ENCODE measurements at regions of chr22 and their contacts with region 1.

Region 1: GRCh38 chr22:39319270-39320022 is at the start of gene RPL3:
- DNase-seq: peak; percentile 96 to 100 (median 98)
- ATAC-seq: peak; percentile 85
- H3K4me3 ChIP-seq: peak within 1 kb of the TSS; percentile 91 to 99
- H3K4me3 Mint-ChIP-seq: peak within 1 kb of the TSS; percentile 96
- H3K27ac ChIP-seq: peak within 1 kb of the TSS; percentile 81 to 90
- H3K27ac Mint-ChIP-seq: peak within 1 kb of the TSS; percentile 96
- H3K4me1 ChIP-seq: peaks cover 45% of the 10 kb centered on the region
- H3K4me1 Mint-ChIP-seq: peaks cover 46% of the 10 kb centered on the region
- H3K27me3 ChIP-seq: no peaks in the 10 kb centered on the region
- H3K27me3 Mint-ChIP-seq: no peaks in the 10 kb centered on the region
- CTCF ChIP-seq: no peak
- total RNA-seq, gene RPL3: 3,777 to 3,874 TPM

Region 2: DNA sequence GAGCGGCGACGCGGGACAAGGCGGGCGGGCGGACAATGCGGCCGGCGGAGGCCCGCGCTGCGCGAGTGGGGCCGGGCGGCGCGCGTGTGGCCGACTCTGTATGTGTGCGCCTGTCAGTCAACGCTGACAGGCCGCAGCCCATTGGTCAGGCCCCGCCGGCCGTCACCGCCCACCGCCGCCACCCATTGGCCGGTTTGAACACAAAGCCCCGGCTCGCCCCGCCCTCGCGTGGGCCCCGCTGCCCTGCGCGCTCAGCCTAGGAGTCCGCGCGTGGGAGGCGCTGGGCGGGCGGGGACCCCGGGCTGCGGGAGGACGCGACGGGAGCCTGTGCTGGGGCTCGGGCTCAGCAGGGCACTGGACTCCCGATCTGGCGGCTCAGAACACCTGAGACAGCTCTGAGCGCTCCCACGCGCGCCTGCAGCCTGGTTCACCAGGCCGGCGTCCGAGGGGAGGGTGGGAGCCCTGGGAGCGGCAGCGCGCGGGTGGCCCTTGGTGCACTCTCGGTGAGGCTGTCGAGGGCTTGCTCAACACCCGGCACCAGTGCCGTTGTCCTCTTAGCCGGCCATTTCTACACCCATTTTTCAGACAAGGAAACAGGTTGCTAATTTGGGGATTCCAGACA is 563.4 kb before region 1 on chr22 and contains the start of gene SUN2:
- CTCF ChIA-PET with region 1: no interaction called
- POLR2A ChIA-PET with region 1: no interaction called
- intact Hi-C with region 1: loop called (anchors 5 to 10 kb)
- DNase-seq: peak; percentile 90 to 97 (median 94)
- ATAC-seq: peak; percentile 66
- H3K4me3 ChIP-seq: peak within 1 kb of the TSS; percentile 91 to 96
- H3K4me3 Mint-ChIP-seq: peak within 1 kb of the TSS; percentile 98
- H3K27ac ChIP-seq: peak within 1 kb of the TSS; percentile 65 to 73
- H3K27ac Mint-ChIP-seq: peak within 1 kb of the TSS; percentile 99
- H3K4me1 ChIP-seq: peaks cover 57% of the 10 kb centered on the region
- H3K4me1 Mint-ChIP-seq: peaks cover 58% of the 10 kb centered on the region
- H3K27me3 ChIP-seq: no peaks in the 10 kb centered on the region
- H3K27me3 Mint-ChIP-seq: no peaks in the 10 kb centered on the region
- CTCF ChIP-seq: no peak
- total RNA-seq, gene SUN2: 431 to 454 TPM

Region 3: DNA sequence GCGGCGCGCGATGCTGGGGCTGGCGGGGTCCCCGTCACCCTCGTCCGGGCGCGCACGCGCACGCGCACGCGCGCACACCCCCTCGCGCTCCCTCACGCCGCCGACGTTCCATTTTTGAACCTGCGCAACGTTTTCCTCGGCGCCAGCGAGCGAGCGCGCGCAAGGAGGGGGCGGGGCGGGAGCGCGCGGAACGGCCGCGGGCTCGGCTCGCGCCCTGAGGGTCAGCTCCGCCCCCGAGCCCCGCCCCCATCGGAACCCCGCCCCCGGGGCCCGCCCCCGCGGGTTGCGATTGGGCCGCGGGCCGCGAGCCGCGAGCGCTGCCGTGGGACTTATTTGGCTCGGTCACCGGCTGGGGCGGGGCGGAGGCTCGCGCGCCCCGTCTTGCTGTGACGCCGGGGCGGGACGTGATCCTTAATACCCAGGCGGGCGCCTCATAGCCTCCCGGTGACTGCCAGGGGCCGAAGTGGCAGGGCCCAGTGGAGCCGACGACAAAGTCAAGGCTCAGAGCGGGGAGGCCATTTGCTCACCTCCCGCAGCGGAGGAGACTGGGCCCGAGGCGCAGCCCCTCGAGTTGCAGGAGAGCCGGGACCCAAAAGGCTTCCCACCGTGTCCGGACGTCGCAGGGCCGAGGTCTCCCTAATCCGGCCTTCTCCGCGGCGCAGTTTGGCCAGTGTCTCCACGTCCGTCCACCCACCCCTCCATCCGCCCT is 166.8 kb before region 1 on chr22 and contains the start of gene CBX7:
- CTCF ChIA-PET with region 1: interaction called, 14 read pairs
- POLR2A ChIA-PET with region 1: interaction called, 54 read pairs
- intact Hi-C with region 1: loop called (anchors 1 kb)
- DNase-seq: peak; percentile 84 to 99 (median 92)
- ATAC-seq: peak; percentile 82
- H3K4me3 ChIP-seq: peak within 1 kb of the TSS; percentile 83 to 89
- H3K4me3 Mint-ChIP-seq: peak within 1 kb of the TSS; percentile 92
- H3K27ac ChIP-seq: peak within 1 kb of the TSS; percentile 86 to 87
- H3K27ac Mint-ChIP-seq: peak within 1 kb of the TSS; percentile 91
- H3K4me1 ChIP-seq: peaks cover 51% of the 10 kb centered on the region
- H3K4me1 Mint-ChIP-seq: peaks cover 42% of the 10 kb centered on the region
- H3K27me3 ChIP-seq: no peaks in the 10 kb centered on the region
- H3K27me3 Mint-ChIP-seq: no peaks in the 10 kb centered on the region
- CTCF ChIP-seq: no peak
- total RNA-seq, gene CBX7: 34.2 to 37.2 TPM

Region 4: DNA sequence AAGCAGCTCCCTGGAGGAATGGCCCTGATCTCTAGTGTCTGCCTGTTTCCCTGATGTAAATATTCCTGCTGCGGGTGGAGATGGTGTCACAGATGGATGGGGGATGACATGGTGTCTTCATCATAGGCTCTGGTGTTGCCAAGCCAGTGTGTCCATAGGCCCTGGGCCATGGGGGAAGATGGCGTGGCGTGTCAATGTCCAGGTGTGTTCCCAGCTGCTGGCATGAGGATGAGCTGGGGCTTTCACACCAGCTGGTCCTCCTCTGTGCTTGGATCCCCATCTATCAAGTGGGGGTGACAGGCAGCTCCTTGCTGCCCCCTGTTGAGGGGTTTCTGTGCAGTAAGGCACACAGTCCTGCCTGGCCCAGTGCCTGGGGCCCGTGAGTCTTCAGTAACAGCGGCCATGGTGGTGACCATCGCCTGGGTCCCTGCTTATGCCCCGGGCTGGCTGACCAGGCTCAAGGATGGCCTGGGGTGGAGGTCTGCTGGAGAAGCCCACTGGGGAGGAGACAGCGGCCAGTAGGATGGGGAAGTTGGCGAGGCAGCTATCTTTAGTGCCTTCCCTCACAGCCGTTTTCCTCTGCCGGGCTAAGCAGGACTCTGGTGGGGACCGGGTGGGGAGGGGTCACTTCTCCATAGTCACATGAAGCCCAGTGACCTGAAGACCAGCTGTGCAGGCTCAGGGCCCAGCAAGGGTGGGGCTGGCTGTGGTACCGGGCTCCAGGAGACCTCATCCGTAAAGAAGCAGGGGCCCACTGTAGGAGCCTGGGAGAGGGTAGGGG is 12.7 kb before region 1 on chr22:
- CTCF ChIA-PET with region 1: interaction called, 38 read pairs
- POLR2A ChIA-PET with region 1: interaction called, 20 read pairs
- intact Hi-C with region 1: no loop called
- DNase-seq: peak in 8 of 9 experiments; percentile 28 to 75 (median 60)
- ATAC-seq: peak; percentile 41
- H3K4me3 ChIP-seq: no peak overlapping the region
- H3K4me3 Mint-ChIP-seq: no peak overlapping the region
- H3K27ac ChIP-seq: no peak overlapping the region
- H3K27ac Mint-ChIP-seq: no peak overlapping the region
- H3K4me1 ChIP-seq: no peaks in the 10 kb centered on the region
- H3K4me1 Mint-ChIP-seq: peaks cover 9% of the 10 kb centered on the region
- H3K27me3 ChIP-seq: no peaks in the 10 kb centered on the region
- H3K27me3 Mint-ChIP-seq: no peaks in the 10 kb centered on the region
- CTCF ChIP-seq: no peak

Region 5: GRCh38 chr22:39395936-39396796 is 76.7 kb after region 1 on chr22:
- CTCF ChIA-PET with region 1: interaction called, 4 read pairs
- POLR2A ChIA-PET with region 1: interaction called, 9 read pairs
- intact Hi-C with region 1: loop called (anchors 1 to 5 kb)
- DNase-seq: no peak
- ATAC-seq: no peak
- H3K4me3 ChIP-seq: no peak overlapping the region
- H3K4me3 Mint-ChIP-seq: no peak overlapping the region
- H3K27ac ChIP-seq: no peak overlapping the region
- H3K27ac Mint-ChIP-seq: no peak overlapping the region
- H3K4me1 ChIP-seq: peaks cover 10% of the 10 kb centered on the region
- H3K4me1 Mint-ChIP-seq: peaks cover 9% of the 10 kb centered on the region
- H3K27me3 ChIP-seq: no peaks in the 10 kb centered on the region
- H3K27me3 Mint-ChIP-seq: no peaks in the 10 kb centered on the region
- CTCF ChIP-seq: no peak

Measured in CD8-positive, alpha-beta T cell (primary cell).